Activated CD4-positive, alpha-beta T cell treated with anti-CD3 and anti-CD28 coated beads, Interleukin-2, amount 10 ng/mL, durations not matched to agents 24 days and 14 days (primary cell): ENCODE measurements at regions of chr1 and their contacts with region 1.

Region 1: DNA sequence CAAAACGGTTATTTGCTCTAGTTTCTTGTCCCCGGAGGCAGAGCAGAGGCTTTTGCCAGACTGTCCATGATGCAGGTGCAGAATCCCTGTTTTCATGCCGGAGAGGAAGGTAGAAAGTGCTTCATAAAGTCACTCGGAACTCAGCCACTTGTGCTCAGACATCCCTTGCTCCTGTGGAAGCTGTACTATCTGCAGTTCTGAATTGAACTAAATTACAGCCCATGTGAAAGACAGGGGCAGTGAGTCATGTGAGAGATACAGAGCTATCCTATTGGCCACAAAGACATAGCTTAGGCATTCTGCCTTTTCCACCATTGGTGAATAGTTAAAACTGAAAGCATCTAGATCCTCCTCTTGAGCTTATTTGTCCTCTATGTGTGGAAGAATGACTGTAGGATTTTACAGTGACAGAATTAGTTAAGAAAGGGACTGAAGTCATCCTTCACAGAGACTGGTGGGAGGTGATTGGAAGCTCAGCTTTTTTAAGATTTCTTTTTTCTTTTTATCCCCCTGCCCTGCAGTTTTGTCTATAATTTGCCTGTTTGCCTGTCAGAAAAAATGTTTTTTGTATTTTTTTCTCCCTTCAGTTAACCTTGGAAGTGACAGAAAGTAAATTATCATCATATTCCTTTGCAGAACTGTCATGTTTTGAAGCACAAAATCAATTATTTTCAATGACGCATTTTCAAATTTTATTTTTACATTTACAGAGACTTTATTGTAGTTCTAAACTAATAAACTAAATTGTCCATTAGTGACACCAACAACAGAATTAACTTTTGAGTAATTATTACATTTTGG is 298.6 kb downstream of the PTPRC start:
- DNase-seq: peak; percentile 91
- H3K4me3 Mint-ChIP-seq: no peak overlapping the region
- H3K27ac Mint-ChIP-seq: peak overlapping the region; percentile 93
- H3K4me1 Mint-ChIP-seq: peaks cover 15% of the 10 kb centered on the region
- H3K27me3 Mint-ChIP-seq: no peaks in the 10 kb centered on the region

Region 2: GRCh38 chr1:198638894-198639635 is 298.4 kb before region 1 on chr1 and contains the start of gene PTPRC:
- intact Hi-C with region 1: loop called (anchors 5 kb)
- DNase-seq: peak; percentile 84
- H3K4me3 Mint-ChIP-seq: peak within 1 kb of the TSS; percentile 89
- H3K27ac Mint-ChIP-seq: peak within 1 kb of the TSS; percentile 95
- H3K4me1 Mint-ChIP-seq: peaks cover 47% of the 10 kb centered on the region
- H3K27me3 Mint-ChIP-seq: no peaks in the 10 kb centered on the region
- total RNA-seq, gene PTPRC: 436 and 438 TPM in 2 replicates

Region 3: DNA sequence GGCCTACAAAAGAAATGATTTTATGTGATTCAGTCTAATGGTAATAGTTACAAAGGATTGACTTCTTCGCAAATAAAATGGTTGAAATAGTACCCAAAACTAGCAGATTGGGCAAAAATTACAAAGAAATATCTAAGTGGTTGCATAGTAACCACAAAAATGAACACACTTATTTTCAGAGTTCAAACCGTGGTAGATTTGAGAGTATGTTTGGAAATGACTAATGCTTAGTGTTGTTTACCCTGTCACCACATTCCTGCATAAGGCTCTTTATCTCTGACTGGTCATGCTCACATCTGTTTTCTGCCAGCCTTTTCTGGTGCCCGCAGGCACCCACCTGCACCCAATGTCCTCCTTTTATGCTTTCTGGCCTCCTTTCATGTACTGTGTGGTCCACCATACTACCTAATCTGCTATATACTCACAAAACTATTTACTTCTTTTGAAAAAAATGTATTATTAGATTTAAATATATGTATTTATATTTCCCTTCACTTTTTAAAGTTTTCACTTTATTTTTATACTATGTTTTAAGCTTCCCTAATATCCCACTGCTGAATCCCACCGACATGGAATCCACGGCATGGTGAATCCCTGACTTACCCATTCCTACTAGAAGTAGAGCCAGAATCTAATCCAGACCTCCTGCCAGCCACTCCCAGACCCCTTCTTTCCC is 268.3 kb before region 1 on chr1:
- intact Hi-C with region 1: no loop called
- DNase-seq: peak; percentile 88
- H3K4me3 Mint-ChIP-seq: peak overlapping the region; percentile 73
- H3K27ac Mint-ChIP-seq: peak overlapping the region; percentile 94
- H3K4me1 Mint-ChIP-seq: peaks cover 79% of the 10 kb centered on the region
- H3K27me3 Mint-ChIP-seq: no peaks in the 10 kb centered on the region

Region 4: GRCh38 chr1:198771563-198772153 is 165.8 kb before region 1 on chr1:
- intact Hi-C with region 1: loop called (anchors 10 kb)
- DNase-seq: peak; percentile 69
- H3K4me3 Mint-ChIP-seq: no peak overlapping the region
- H3K27ac Mint-ChIP-seq: no peak overlapping the region
- H3K4me1 Mint-ChIP-seq: peaks cover 14% of the 10 kb centered on the region
- H3K27me3 Mint-ChIP-seq: peaks cover 2% of the 10 kb centered on the region

Region 5: DNA sequence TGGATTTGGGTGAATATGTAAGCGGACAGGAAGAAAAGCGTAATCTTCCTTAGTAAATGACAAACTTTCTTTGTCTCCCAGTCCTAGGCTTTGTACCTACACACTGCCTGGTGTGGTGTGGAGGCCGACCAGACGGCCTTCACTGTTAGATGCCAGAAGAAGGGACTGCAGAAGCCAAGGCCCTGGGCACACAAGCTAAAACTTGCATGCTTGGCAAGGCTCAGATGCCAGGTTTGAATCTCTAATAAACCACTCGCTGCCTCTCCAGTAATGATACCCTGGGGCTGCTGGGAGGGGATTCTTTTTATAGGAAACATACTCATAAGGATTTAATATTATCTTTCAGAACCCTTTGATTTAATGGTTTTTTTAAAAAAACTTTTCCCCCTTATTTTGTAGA is 34.8 kb before region 1 on chr1:
- intact Hi-C with region 1: no loop called
- DNase-seq: no peak
- H3K4me3 Mint-ChIP-seq: no peak overlapping the region
- H3K27ac Mint-ChIP-seq: no peak overlapping the region
- H3K4me1 Mint-ChIP-seq: peaks cover 44% of the 10 kb centered on the region
- H3K27me3 Mint-ChIP-seq: no peaks in the 10 kb centered on the region

Region 6: GRCh38 chr1:198922638-198923430 is 14.6 kb before region 1 on chr1:
- intact Hi-C with region 1: loop called (anchors 1 kb)
- DNase-seq: no peak
- H3K4me3 Mint-ChIP-seq: peak overlapping the region; percentile 84
- H3K27ac Mint-ChIP-seq: peak overlapping the region; percentile 93
- H3K4me1 Mint-ChIP-seq: peaks cover 71% of the 10 kb centered on the region
- H3K27me3 Mint-ChIP-seq: no peaks in the 10 kb centered on the region

Region 7: DNA sequence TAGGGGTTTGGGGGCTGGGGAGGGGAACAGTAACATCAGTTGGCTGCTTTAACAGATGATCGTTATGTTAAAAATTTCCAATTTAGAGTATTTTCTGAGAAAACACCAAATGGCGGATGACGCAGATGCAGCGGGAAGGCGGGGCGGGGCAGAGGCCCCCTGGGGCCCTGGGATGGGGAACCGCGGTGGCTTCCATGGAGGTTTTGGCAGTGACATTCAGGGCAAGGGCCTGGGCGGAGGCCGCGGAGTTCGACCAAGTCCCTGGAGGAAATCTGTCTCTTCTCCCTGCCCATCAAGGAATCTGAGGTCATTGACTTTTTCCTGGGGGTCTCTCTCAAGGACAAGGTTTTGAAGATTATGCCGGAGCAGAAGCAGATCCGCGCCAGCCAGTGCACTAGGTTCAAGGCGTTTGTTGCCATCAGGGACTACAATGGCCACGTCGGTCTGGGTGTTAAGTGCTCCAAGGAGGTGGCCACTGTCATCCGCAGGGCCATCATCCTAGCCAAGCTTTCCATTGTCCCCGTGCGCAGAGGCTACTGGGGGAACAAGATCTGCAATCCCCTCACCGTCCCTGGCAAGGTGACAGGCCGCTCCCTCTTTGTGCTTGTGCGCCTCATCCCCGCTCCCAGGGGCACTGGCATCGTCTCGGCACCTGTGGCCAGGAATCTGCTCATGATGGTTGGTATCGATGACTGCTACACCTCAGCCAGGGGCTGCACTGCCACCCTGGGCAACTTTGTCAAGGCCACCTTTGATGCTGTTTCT is 11.6 kb after region 1 on chr1:
- intact Hi-C with region 1: no loop called
- DNase-seq: no peak
- H3K4me3 Mint-ChIP-seq: no peak overlapping the region
- H3K27ac Mint-ChIP-seq: no peak overlapping the region
- H3K4me1 Mint-ChIP-seq: peaks cover 3% of the 10 kb centered on the region
- H3K27me3 Mint-ChIP-seq: no peaks in the 10 kb centered on the region

Region 8: GRCh38 chr1:199041173-199041914 is 103.9 kb after region 1 on chr1:
- intact Hi-C with region 1: loop called (anchors 1 kb)
- DNase-seq: peak; percentile 88
- H3K4me3 Mint-ChIP-seq: peak overlapping the region; percentile 59
- H3K27ac Mint-ChIP-seq: peak overlapping the region; percentile 87
- H3K4me1 Mint-ChIP-seq: peaks cover 37% of the 10 kb centered on the region
- H3K27me3 Mint-ChIP-seq: no peaks in the 10 kb centered on the region

Region 9: DNA sequence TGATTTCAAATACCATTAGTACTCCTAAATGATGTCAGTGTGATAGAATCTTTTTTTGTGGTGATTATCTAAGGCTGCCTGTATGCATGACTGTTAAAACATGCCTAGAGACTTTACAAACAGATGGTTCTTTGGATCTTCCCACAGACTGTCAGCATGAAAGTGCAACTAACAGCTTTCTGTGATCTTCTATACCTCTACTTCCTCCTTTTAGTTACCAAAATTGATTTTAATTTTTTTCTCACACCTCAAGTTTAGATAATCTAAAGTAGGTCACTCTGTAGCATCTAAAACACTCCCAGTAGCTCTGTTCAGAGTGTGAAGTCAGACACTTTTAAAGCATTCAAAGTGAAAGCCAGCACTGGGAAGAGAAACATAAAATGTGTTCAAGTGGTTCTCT is 235.9 kb after region 1 on chr1:
- intact Hi-C with region 1: loop called (anchors 1 kb)
- DNase-seq: peak; percentile 79
- H3K4me3 Mint-ChIP-seq: peak overlapping the region; percentile 16
- H3K27ac Mint-ChIP-seq: peak overlapping the region; percentile 60
- H3K4me1 Mint-ChIP-seq: peaks cover 44% of the 10 kb centered on the region
- H3K27me3 Mint-ChIP-seq: peaks cover 7% of the 10 kb centered on the region

Region 10: GRCh38 chr1:199243423-199244061 is 306.1 kb after region 1 on chr1:
- intact Hi-C with region 1: loop called (anchors 5 kb)
- DNase-seq: peak; percentile 93
- H3K4me3 Mint-ChIP-seq: no peak overlapping the region
- H3K27ac Mint-ChIP-seq: no peak overlapping the region
- H3K4me1 Mint-ChIP-seq: peaks cover 19% of the 10 kb centered on the region
- H3K27me3 Mint-ChIP-seq: peaks cover 24% of the 10 kb centered on the region

Region 11: GRCh38 chr1:199472025-199472424 is 534.6 kb after region 1 on chr1:
- intact Hi-C with region 1: no loop called
- DNase-seq: no peak
- H3K4me3 Mint-ChIP-seq: no peak overlapping the region
- H3K27ac Mint-ChIP-seq: no peak overlapping the region
- H3K4me1 Mint-ChIP-seq: no peaks in the 10 kb centered on the region
- H3K27me3 Mint-ChIP-seq: peaks cover 9% of the 10 kb centered on the region